Breast epithelium (tissue), 4 donors: ENCODE measurements at regions of chr10 and their contacts with region 1.

Region 1: GRCh38 chr10:61729596-61729995 is 66.9 kb downstream of the CABCOCO1 start:
- DNase-seq: no peak
- H3K4me3 ChIP-seq: no peak overlapping the region
- H3K27ac ChIP-seq: no peak overlapping the region
- H3K4me1 ChIP-seq: no peaks in the 10 kb centered on the region
- H3K27me3 ChIP-seq: no peaks in the 10 kb centered on the region
- CTCF ChIP-seq: no peak
- POLR2A ChIP-seq: no peak

Region 2: DNA sequence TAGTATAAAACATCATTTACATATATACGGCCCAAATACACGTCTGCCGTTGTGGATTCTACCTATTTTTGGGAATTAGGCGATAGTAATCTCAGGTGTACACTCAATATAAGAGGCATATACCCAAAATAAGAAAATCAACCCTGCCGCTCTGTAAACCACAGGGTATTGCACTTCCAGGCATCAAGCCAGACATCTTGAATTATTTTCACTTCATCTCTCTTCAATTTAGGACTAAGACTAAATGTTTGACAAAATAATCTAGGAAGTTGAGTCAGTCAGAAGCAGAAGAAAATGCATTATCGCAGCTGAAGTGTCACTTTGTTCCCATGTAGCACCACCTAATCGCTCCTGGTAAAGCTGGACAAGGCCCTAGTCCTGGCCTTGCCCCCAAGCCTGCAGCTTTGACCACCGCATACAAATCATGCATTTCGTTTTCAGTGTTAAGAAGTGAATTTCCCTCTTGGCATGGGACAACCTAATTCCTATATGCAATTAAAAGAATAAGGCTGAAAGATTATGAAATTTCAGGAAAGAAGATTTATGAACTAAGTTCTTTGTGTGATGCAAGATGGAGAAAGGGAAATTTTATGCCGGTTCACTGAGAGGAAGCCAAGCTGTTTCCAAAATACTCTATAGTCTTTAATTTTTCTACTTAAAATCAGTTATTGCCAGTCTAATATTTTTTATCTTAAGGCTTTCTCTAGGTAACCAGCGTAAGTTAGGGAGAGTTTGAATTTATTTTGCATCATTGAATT is 40.9 kb before region 1 on chr10:
- intact Hi-C with region 1: no loop called
- DNase-seq: no peak
- H3K4me3 ChIP-seq: no peak overlapping the region
- H3K27ac ChIP-seq: no peak overlapping the region
- H3K4me1 ChIP-seq: no peaks in the 10 kb centered on the region
- H3K27me3 ChIP-seq: no peaks in the 10 kb centered on the region
- CTCF ChIP-seq: no peak
- POLR2A ChIP-seq: no peak

Region 3: DNA sequence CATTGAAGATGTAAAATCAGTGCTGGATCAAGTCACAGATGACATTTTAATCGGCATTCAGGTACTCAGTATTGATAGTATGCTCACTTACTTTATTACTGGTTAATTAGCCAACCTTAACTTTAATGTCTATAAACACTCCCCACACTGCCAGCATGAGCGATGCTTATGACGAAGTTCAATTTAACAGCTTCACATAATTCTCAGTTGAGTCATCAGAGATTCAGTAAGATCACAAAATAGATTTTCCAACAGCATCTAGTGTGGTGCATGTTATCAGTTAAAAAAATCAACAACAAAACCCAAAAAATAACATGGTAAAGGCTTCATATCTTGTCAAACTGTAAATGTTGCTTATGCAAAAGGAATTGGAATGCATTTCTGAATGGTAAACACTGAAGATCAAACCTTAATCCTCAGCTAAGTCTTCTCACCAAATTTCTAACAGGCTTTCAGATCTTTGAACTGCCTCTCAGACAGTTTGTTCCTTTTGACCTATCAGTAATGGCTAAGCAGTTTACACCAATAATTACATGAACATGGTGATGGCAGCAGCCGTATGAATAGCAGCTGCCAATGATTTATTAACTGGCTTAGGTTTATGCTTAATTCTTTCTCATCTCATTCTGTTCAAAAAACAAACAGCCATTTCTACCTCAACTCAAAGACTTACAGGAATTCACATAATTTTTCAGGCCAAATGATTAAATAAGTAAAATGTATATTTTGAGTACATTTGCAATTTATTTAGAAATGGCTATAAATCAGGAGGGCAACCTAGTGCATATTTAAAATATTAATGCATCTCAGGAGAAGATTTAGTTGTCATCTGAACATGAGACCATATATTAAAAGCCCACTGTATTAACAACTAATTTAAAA is 31.6 kb after region 1 on chr10:
- intact Hi-C with region 1: no loop called
- DNase-seq: no peak
- H3K4me3 ChIP-seq: no peak overlapping the region
- H3K27ac ChIP-seq: peak overlapping the region; percentile 26 to 29
- H3K4me1 ChIP-seq: no peaks in the 10 kb centered on the region
- H3K27me3 ChIP-seq: no peaks in the 10 kb centered on the region
- CTCF ChIP-seq: no peak
- POLR2A ChIP-seq: no peak

Region 4: DNA sequence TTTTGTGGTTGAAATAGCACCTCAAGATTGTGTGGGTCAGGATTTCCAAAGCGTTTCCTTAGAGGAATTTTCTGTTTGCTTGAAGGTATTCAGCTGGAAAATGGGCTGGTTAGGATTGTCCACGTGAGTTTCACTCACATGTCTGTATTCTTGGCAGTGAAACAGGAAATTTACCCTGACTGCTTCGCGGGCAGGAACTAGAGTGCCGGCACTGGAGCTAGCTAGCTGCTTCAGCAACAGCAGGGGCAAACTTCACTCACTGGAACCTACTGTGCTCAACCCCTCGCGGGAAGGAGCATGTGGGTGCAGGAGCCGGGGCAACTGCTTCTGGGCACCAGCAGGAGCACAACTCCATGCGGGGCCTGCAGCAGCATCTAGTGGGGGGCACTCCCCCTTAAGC is 577.1 kb after region 1 on chr10:
- intact Hi-C with region 1: loop called (anchors 5 kb)
- DNase-seq: no peak
- H3K4me3 ChIP-seq: no peak overlapping the region
- H3K27ac ChIP-seq: no peak overlapping the region
- H3K4me1 ChIP-seq: no peaks in the 10 kb centered on the region
- H3K27me3 ChIP-seq: no peaks in the 10 kb centered on the region
- CTCF ChIP-seq: no peak
- POLR2A ChIP-seq: no peak